ENCODE measurements at regions of chr16 and their contacts with region 1.

Region 1: DNA sequence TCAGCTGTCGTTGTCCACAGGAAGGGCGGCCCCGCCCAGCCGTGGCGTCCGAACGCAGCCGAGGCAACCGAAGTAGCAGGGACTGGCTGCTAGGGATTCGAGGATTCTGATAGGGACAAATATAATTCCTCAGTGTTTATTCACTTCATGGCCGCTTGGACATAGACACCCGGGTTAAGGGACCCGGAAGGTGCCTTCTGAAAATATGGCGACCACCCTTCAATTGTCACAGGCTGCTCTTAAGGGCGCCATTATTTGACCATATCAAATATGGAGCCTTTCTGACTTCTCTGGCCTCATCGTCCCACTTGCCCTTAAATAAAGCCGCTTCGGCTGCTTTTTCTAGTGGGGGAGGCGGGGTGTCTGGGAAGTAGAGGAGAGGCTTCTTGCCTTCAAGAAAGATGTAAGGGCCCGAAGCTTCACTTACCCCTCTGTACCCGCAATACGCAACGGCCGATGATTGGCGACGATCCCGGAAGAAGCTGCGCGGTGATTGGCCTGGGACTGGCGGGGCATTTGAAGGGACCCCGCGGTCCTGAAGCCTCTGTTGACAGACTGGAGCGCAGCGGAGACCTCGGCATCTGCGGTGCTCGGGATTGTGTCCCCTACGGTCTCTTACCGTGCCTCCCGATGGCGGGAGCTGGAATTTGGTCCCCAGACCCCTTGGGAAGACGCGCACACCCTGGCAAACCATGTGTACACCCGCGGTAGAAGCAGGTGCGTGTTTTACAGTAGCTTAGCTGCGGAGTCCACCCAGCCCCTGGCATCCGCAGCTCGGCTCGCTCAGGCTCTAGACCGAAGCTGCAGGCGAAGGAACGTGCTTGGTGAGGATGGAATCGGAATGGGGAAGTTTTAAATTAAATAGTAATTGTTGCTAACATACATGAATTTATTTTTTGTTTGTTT is at the start of gene ZNF688:
- DNase-seq: peak; percentile 74 to 99 (median 97)
- ATAC-seq: peak; percentile 89
- H3K4me3 ChIP-seq: peak within 1 kb of the TSS; percentile 88
- H3K4me3 Mint-ChIP-seq: peak within 1 kb of the TSS; percentile 87 to 98 (median 90)
- H3K27ac ChIP-seq: peak within 1 kb of the TSS; percentile 94
- H3K27ac Mint-ChIP-seq: peak within 1 kb of the TSS; percentile 92 to 98 (median 95)
- H3K4me1 ChIP-seq: peaks cover 36 to 38% of the 10 kb centered on the region in 2 donors
- H3K4me1 Mint-ChIP-seq: peaks cover 17 to 51% (median 39%) of the 10 kb centered on the region in 7 donors
- H3K27me3 ChIP-seq: no peaks in the 10 kb centered on the region
- H3K27me3 Mint-ChIP-seq: no peaks in the 10 kb centered on the region
- total RNA-seq, gene ZNF688: 8.8 to 24.3 (median 16.3) TPM

Region 2: DNA sequence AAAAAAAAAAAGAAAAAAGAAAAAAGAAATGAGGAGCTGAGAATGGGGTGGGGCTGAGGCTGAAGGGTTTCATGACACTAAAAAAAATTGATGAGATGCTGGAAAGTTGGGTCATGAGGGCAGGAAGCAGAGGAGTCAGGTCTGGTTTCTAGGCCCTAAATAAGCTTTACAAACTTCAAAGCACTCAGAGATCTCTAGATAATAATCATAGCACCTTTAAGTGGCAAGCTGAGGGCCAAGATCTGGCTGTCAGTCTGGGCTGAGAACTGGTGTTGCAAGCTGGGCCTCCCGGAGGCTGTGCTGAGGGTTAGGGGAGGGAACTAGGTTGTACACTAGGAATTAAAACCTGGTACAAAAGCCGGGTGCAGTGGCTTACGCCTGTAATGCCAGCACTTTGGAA is 20.2 kb before region 1 on chr16:
- CTCF ChIA-PET with region 1: interaction called, 8 read pairs
- POLR2A ChIA-PET with region 1: interaction called, 149 read pairs
- intact Hi-C with region 1: loop called in 1 of 2 experiments (anchors 1 kb)
- DNase-seq: peak in 8 of 9 donors; percentile 53 to 82 (median 74)
- ATAC-seq: peak; percentile 89
- H3K4me3 ChIP-seq: peak overlapping the region; percentile 5
- H3K4me3 Mint-ChIP-seq: peak overlapping the region; percentile 32 to 87 (median 75)
- H3K27ac ChIP-seq: peak overlapping the region; percentile 59
- H3K27ac Mint-ChIP-seq: peak overlapping the region; percentile 83 to 98 (median 93)
- H3K4me1 ChIP-seq: peaks cover 24 to 32% of the 10 kb centered on the region in 2 donors
- H3K4me1 Mint-ChIP-seq: peaks cover 49 to 65% (median 55%) of the 10 kb centered on the region in 7 donors
- H3K27me3 ChIP-seq: no peaks in the 10 kb centered on the region
- H3K27me3 Mint-ChIP-seq: no peaks in the 10 kb centered on the region

Region 3: GRCh38 chr16:30585400-30586189 is 13.6 kb after region 1 on chr16 and contains the start of gene ZNF785:
- CTCF ChIA-PET with region 1: interaction called, 3 read pairs
- POLR2A ChIA-PET with region 1: interaction called, 45 read pairs
- intact Hi-C with region 1: loop called (anchors 1 kb)
- DNase-seq: peak; percentile 72 to 95 (median 93)
- ATAC-seq: peak; percentile 100
- H3K4me3 ChIP-seq: peak within 1 kb of the TSS; percentile 77
- H3K4me3 Mint-ChIP-seq: peak within 1 kb of the TSS; percentile 85 to 98 (median 94)
- H3K27ac ChIP-seq: peak within 1 kb of the TSS; percentile 81
- H3K27ac Mint-ChIP-seq: peak within 1 kb of the TSS; percentile 89 to 95 (median 92)
- H3K4me1 ChIP-seq: peaks cover 8 to 12% of the 10 kb centered on the region in 2 donors
- H3K4me1 Mint-ChIP-seq: peaks cover 6 to 44% (median 32%) of the 10 kb centered on the region in 7 donors
- H3K27me3 ChIP-seq: no peaks in the 10 kb centered on the region
- H3K27me3 Mint-ChIP-seq: peaks cover 0 to 2% (median 0%) of the 10 kb centered on the region in 5 donors
- total RNA-seq, gene ZNF785: 10.2 to 37.1 (median 21.4) TPM

Region 4: GRCh38 chr16:30609926-30610839 is 38.2 kb after region 1 on chr16 and contains the start of gene ZNF689:
- CTCF ChIA-PET with region 1: interaction called, 3 read pairs
- POLR2A ChIA-PET with region 1: interaction called, 21 read pairs
- intact Hi-C with region 1: loop called in 1 of 2 experiments (anchors 1 kb)
- DNase-seq: peak; percentile 90 to 98 (median 93)
- ATAC-seq: peak; percentile 96
- H3K4me3 ChIP-seq: peak within 1 kb of the TSS; percentile 98
- H3K4me3 Mint-ChIP-seq: peak within 1 kb of the TSS; percentile 89 to 97 (median 94)
- H3K27ac ChIP-seq: peak within 1 kb of the TSS; percentile 94
- H3K27ac Mint-ChIP-seq: peak within 1 kb of the TSS; percentile 94 to 99 (median 97)
- H3K4me1 ChIP-seq: peaks cover 8 to 11% of the 10 kb centered on the region in 2 donors
- H3K4me1 Mint-ChIP-seq: peaks cover 5 to 26% (median 22%) of the 10 kb centered on the region in 7 donors
- H3K27me3 ChIP-seq: no peaks in the 10 kb centered on the region
- H3K27me3 Mint-ChIP-seq: no peaks in the 10 kb centered on the region
- total RNA-seq, gene ZNF689: 6.8 to 14.6 (median 12.4) TPM